T-cell (primary cell): ENCODE measurements at regions of chr3 and their contacts with region 1.

Region 1: GRCh38 chr3:64030741-64031140 is 7.4 kb upstream of the PSMD6 start:
- DNase-seq: peak; percentile 44 to 93 (median 66)
- ATAC-seq: peak; percentile 89 to 100 (median 92)
- H3K4me3 ChIP-seq: peak overlapping the region in 1 of 2 donors; percentile 38
- H3K4me3 Mint-ChIP-seq: peak overlapping the region; percentile 71 to 83 (median 74)
- H3K27ac ChIP-seq: no peak overlapping the region
- H3K27ac Mint-ChIP-seq: peak overlapping the region; percentile 75 to 79
- H3K4me1 ChIP-seq: peaks cover 0 to 8% of the 10 kb centered on the region in 2 experiments
- H3K4me1 Mint-ChIP-seq: peaks cover 5 to 9% (median 5%) of the 10 kb centered on the region in 3 donors
- H3K27me3 ChIP-seq: peaks cover 0 to 3% of the 10 kb centered on the region in 2 experiments
- H3K27me3 Mint-ChIP-seq: peaks cover 25 to 29% of the 10 kb centered on the region in 2 donors

Region 2: DNA sequence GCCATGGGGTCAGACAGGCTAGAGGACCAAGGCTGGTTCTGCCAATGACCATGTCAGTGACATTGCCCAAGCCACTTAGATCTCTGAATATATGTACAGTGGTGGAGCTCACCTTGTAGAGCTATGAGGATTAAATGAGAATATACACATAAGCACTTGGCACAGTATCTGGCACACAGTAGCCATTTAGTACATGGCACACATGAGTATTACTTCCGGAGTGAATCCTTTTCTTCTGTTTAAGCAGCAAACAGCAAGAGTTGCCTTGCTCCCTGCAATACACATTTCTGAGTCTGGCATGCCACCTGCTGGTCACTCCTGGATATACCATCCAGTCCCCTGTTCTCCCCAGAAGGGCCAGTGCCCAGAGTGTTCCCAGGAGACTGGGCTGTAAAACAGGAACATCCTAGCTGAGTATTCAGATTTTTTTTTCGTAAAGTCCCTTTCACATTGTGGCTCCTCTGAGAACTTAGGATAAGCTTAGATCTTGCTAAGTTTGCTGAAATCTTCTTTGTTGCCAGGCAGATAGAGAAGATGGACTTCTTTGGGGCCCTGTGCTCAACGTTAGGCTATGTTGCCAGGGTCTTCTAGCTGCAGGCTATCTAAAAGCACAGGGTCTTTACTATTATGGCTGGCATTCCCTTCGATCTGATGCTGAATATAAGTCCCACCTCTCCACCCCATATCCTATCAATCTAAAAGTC is 453.7 kb after region 1 on chr3:
- CTCF ChIA-PET with region 1: interaction called, 6 to 13 read pairs
- POLR2A ChIA-PET with region 1: no interaction called
- DNase-seq: peak; percentile 9 to 66 (median 40)
- ATAC-seq: peak; percentile 61 to 72 (median 68)
- H3K4me3 ChIP-seq: no peak overlapping the region
- H3K4me3 Mint-ChIP-seq: no peak overlapping the region
- H3K27ac ChIP-seq: no peak overlapping the region
- H3K27ac Mint-ChIP-seq: no peak overlapping the region
- H3K4me1 ChIP-seq: no peaks in the 10 kb centered on the region
- H3K4me1 Mint-ChIP-seq: peaks cover 0 to 4% (median 3%) of the 10 kb centered on the region in 3 donors
- H3K27me3 ChIP-seq: peaks cover 3 to 7% of the 10 kb centered on the region in 2 experiments
- H3K27me3 Mint-ChIP-seq: peaks cover 12 to 13% of the 10 kb centered on the region in 2 donors